Activated CD4-positive, alpha-beta memory T cell treated with anti-CD3 and anti-CD28 coated beads for 36 hours (primary cell): ENCODE measurements at regions of chr17 and their contacts with region 1.

Region 1: DNA sequence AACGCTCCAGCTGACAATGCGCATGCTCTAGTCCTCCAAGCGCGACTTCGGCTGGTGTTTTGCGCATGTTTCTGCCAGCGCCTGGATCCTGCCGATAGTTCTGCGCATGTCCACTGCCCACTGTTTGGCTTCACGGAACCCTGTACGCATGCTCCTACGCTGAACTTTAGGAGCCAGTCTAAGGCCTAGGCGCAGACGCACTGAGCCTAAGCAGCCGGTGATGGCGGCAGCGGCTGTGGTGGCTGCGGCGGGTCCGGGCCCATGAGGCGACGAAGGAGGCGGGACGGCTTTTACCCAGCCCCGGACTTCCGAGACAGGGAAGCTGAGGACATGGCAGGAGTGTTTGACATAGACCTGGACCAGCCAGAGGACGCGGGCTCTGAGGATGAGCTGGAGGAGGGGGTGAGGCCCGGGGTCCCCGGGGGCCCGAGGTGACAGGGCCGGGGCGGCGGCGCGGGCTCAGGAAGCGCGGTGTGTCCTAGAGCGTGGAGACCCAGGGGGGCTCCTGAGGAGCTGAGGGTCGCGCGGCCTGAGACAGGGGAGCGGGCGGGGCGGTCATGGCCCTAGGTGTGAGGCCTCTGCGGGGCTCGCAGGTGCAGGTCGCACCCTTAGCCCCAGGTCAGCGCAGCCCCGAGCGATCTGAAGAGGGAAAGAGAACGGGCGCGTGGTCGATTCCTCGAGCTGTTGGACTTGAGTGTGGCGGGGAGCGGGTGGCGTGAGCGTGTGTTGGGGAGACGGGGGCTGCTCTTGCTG is at the starts of genes RPS6KB1 and TUBD1:
- DNase-seq: peak; percentile 99
- H3K4me3 Mint-ChIP-seq: peak within 1 kb of the TSS; percentile 99
- H3K27ac Mint-ChIP-seq: peak within 1 kb of the TSS; percentile 92
- H3K4me1 Mint-ChIP-seq: peaks cover 47% of the 10 kb centered on the region
- H3K27me3 Mint-ChIP-seq: no peaks in the 10 kb centered on the region
- total RNA-seq, gene RPS6KB1: 41.6 to 44.8 TPM
- total RNA-seq, gene TUBD1: 11.0 to 12.7 TPM

Region 2: DNA sequence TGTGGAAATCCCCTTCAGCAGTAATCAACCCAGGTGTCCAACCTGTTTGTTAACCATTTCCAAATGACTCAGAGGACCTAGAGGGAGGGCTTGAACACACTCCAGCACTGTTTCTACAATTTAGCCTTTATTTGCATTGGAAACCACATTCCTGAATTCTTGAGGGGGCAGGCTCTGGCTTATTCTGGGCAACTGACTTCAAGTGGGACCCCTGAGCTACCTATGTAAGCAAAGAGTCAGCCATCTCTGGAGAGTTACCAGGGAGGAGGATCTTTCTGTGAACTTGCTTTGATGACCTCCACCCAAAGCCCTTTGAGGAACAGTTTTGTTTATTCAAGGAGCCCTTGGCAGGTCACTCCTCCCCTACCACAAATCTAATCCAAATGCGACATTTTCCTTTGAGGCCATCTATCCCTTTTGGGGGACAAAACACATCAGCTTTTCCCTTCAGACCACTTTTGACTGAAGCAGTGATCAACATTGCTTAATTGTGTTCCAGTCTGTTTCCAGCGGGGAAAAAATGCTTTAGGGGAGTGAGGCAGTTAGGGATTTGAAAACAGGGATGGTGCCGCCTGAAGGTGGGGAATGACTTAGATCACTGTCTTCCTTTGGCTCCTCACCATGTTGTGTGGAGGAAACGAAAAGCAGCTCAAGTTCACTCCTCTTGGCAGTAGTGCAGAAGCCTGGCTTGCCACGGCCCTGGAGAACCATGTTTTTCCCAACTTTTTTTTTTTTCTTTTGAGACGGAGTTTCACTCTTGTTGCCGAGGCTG is 46.5 kb before region 1 on chr17:
- CTCF ChIA-PET with region 1: no interaction called
- POLR2A ChIA-PET with region 1: interaction called, 3 read pairs
- intact Hi-C with region 1: loop called (anchors 5 kb)
- DNase-seq: peak; percentile 31
- H3K4me3 Mint-ChIP-seq: peak overlapping the region; percentile 60
- H3K27ac Mint-ChIP-seq: peak overlapping the region; percentile 100
- H3K4me1 Mint-ChIP-seq: peaks cover 68% of the 10 kb centered on the region
- H3K27me3 Mint-ChIP-seq: peaks cover 2% of the 10 kb centered on the region

Region 3: DNA sequence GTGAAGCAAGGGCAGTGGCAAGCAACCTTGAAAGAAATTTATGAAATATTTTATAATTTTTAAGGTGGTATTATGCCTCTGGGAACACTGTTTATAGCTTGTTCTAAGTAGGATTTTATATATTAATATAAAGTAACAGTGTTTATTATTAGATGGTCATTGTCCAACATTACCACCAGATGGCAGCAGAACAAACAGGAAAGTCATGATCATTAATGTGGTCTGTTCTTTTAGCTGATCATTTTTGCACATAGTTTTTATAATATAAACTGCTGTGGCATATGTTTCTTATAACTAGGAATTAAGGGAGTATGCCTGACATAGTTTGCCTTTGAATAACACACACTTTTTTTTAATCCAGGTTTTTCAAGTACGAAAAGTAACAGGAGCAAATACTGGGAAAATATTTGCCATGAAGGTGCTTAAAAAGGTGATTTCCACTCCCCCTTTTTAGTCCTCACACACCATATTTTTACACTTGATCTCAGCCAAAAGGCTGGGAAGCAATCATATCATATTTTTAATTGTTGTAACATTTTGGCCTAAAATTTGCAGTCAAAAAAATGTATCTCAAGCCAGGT is 21.3 kb after region 1 on chr17:
- CTCF ChIA-PET with region 1: interaction called, 14 read pairs
- POLR2A ChIA-PET with region 1: interaction called, 3 read pairs
- intact Hi-C with region 1: no loop called
- DNase-seq: no peak
- H3K4me3 Mint-ChIP-seq: no peak overlapping the region
- H3K27ac Mint-ChIP-seq: no peak overlapping the region
- H3K4me1 Mint-ChIP-seq: no peaks in the 10 kb centered on the region
- H3K27me3 Mint-ChIP-seq: no peaks in the 10 kb centered on the region

Region 4: GRCh38 chr17:59941131-59941530 is 48.0 kb after region 1 on chr17:
- CTCF ChIA-PET with region 1: interaction called, 3 read pairs
- POLR2A ChIA-PET with region 1: interaction called, 3 read pairs
- intact Hi-C with region 1: loop called (anchors 2 kb)
- DNase-seq: peak; percentile 20
- H3K4me3 Mint-ChIP-seq: no peak overlapping the region
- H3K27ac Mint-ChIP-seq: peak overlapping the region; percentile 91
- H3K4me1 Mint-ChIP-seq: peaks cover 40% of the 10 kb centered on the region
- H3K27me3 Mint-ChIP-seq: no peaks in the 10 kb centered on the region

Region 5: GRCh38 chr17:59964482-59965328 is 71.6 kb after region 1 on chr17 and contains the start of gene RNFT1:
- CTCF ChIA-PET with region 1: no interaction called
- POLR2A ChIA-PET with region 1: interaction called, 10 read pairs
- intact Hi-C with region 1: loop called (anchors 1 kb)
- DNase-seq: peak; percentile 93
- H3K4me3 Mint-ChIP-seq: peak within 1 kb of the TSS; percentile 75
- H3K27ac Mint-ChIP-seq: peak within 1 kb of the TSS; percentile 85
- H3K4me1 Mint-ChIP-seq: peaks cover 17% of the 10 kb centered on the region
- H3K27me3 Mint-ChIP-seq: no peaks in the 10 kb centered on the region
- total RNA-seq, gene RNFT1: 34.7 to 35.5 TPM

Region 6: GRCh38 chr17:60036796-60037612 is 143.9 kb after region 1 on chr17:
- CTCF ChIA-PET with region 1: no interaction called
- POLR2A ChIA-PET with region 1: no interaction called
- intact Hi-C with region 1: loop called (anchors 10 kb)
- DNase-seq: peak; percentile 78
- H3K4me3 Mint-ChIP-seq: peak overlapping the region; percentile 32
- H3K27ac Mint-ChIP-seq: peak overlapping the region; percentile 40
- H3K4me1 Mint-ChIP-seq: peaks cover 5% of the 10 kb centered on the region
- H3K27me3 Mint-ChIP-seq: peaks cover 15% of the 10 kb centered on the region